Activated naive CD8-positive, alpha-beta T cell treated with anti-CD3 and anti-CD28 coated beads, Interleukin-2, amount 10 ng/mL, durations not matched to agents 7 days and 5 days (primary cell): ENCODE measurements at regions of chr16 and their contacts with region 1.

Region 1: DNA sequence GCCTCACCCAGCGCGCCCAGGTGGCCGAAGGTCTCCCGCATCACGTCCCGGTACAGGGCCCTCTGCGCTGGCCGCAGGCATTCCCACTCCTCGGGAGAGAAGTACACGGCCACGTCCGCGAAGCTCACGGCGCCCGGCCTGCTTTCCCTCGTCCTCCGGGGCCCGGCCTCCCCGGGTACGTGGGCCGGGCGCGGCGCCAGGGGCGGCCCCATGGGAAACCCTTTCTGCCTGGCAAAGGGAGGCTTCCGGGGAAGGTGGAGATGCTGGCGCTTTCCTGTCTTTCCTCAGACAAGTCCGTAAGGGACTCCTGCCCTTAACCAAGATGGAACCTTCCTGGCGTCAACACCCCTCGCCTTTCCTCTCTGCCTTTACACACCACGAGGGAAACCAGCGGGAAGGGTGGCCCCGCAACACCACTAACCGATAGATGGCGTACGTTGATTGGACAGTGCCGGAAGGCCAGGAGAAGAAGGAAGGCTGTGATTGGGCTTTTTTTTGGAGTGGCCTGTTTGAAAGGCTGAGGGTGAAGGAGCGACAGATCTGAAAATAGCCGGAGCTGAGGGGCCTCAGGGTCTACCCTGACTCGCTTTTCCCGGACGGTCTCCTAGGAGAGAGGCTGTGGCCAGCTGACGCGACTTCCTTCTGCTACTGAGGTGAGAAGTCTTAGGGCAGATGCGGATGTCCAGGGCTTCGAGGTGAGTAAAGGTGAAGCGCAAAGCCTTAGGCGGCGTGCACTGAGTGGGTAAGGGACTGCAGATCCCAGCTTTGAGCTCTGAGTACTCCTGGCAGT is at the start of gene ZNF785:
- DNase-seq: peak; percentile 88
- ATAC-seq: peak; percentile 98
- H3K4me3 Mint-ChIP-seq: peak within 1 kb of the TSS; percentile 96
- H3K27ac Mint-ChIP-seq: peak within 1 kb of the TSS; percentile 84
- H3K4me1 Mint-ChIP-seq: peaks cover 20% of the 10 kb centered on the region
- H3K27me3 Mint-ChIP-seq: no peaks in the 10 kb centered on the region
- total RNA-seq, gene ZNF785: 22.3 to 24.8 TPM

Region 2: DNA sequence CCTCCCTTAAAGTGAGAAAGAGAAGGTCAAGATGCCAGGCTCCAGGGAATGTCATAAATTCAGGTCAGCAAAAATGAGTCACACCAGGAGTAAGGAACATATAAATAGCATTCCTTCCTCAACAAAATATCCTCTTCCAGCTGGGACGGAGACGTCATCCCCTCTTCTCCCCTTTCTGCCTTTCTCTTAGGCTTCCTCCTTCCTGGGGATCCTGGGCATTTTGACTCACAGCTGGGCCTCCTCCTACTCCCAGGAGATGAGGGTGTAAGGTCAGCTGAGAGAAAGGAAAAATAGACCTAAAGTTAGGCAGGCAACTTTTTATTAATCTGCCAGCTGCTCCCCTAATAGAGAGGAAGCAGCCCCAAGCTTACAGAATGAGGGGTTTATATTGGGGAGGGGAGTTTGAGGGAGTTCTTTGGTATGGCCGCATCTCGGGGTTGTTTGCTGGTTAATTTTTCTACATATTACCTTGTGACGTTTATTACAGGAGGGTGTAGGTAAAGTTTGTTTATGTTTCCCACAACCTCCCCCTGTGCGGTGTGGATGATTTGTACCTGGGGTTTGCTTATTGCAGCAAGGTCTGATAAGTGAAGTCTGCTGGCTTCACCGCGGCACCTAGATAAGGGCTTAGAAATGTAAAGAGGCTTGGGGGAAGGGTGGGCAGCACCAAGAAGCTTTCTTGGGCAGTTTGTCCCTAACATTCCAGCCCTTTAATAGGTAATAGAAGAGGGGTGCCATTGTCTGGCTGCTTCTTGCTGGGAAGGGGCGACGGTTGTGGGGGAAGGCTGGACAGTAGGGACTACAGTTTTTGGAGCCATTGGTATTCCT is 43.9 kb before region 1 on chr16:
- POLR2A ChIA-PET with region 1: no interaction called
- DNase-seq: no peak
- ATAC-seq: no peak
- H3K4me3 Mint-ChIP-seq: no peak overlapping the region
- H3K27ac Mint-ChIP-seq: no peak overlapping the region
- H3K4me1 Mint-ChIP-seq: peaks cover 6% of the 10 kb centered on the region
- H3K27me3 Mint-ChIP-seq: no peaks in the 10 kb centered on the region

Region 3: DNA sequence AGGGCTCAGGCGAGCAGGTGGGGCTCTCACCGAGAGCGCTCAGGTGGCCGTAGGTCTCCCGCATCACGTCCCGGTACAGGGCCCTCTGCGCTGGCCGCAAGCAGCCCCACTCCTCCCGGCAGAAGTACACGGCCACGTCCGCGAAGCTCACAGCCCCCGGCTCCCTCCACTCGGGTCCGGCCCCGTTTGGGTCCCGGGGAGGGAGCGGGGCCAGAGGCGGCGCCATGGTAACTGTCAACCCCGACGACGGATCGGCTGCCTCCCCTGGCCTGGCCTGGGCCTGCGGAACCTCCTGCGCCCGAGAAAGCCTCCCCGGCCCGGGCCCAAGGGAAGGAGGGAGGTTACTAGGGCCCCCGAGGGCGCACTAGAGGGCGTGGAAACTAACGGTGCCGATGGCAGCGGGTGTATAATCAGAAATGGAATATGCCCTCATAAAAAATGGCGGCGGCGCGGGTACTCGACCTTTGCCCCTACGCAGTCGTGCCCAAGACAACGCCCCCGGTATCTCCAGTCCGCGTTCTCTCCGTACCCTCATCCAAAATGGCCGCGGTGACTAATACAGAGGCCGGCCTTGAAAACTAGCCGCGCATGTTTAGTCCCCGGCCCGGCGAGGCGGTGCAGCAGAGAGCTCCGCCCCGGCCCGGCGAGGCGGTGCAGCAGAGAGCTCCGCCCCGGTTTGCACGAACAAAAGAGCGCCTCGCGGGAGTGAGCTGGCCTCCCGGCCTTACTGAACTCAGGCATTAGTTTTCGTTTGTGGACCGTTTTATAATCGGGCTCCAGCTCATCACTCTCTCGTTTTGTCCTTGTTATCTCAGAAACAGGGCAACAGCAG is 27.4 kb before region 1 on chr16 and contains the start of gene ZNF764:
- POLR2A ChIA-PET with region 1: interaction called, 18 read pairs
- DNase-seq: peak; percentile 94
- ATAC-seq: peak; percentile 97
- H3K4me3 Mint-ChIP-seq: peak within 1 kb of the TSS; percentile 90
- H3K27ac Mint-ChIP-seq: peak within 1 kb of the TSS; percentile 91
- H3K4me1 Mint-ChIP-seq: peaks cover 34% of the 10 kb centered on the region
- H3K27me3 Mint-ChIP-seq: no peaks in the 10 kb centered on the region
- total RNA-seq, gene ZNF764: 20.9 to 23.3 TPM

Region 4: GRCh38 chr16:30609926-30610839 is 24.6 kb after region 1 on chr16 and contains the start of gene ZNF689:
- POLR2A ChIA-PET with region 1: interaction called, 10 read pairs
- DNase-seq: peak; percentile 92
- ATAC-seq: peak; percentile 89
- H3K4me3 Mint-ChIP-seq: peak within 1 kb of the TSS; percentile 96
- H3K27ac Mint-ChIP-seq: peak within 1 kb of the TSS; percentile 94
- H3K4me1 Mint-ChIP-seq: peaks cover 24% of the 10 kb centered on the region
- H3K27me3 Mint-ChIP-seq: no peaks in the 10 kb centered on the region
- total RNA-seq, gene ZNF689: 12.7 to 14.4 TPM